OCI-LY7 (cell line): ENCODE measurements at regions of chr13 and their contacts with region 1.

Region 1: GRCh38 chr13:30617315-30618185 is at the start of gene USPL1:
- DNase-seq: peak; percentile 99
- H3K4me3 ChIP-seq: peak within 1 kb of the TSS; percentile 73
- H3K27ac ChIP-seq: peak within 1 kb of the TSS; percentile 92
- H3K4me1 ChIP-seq: peaks cover 43% of the 10 kb centered on the region
- CTCF ChIP-seq: peak; percentile 29; the same call in 1 of the 2 replicates
- total RNA-seq, gene USPL1: 19.2 and 21.1 TPM in 2 replicates

Region 2: DNA sequence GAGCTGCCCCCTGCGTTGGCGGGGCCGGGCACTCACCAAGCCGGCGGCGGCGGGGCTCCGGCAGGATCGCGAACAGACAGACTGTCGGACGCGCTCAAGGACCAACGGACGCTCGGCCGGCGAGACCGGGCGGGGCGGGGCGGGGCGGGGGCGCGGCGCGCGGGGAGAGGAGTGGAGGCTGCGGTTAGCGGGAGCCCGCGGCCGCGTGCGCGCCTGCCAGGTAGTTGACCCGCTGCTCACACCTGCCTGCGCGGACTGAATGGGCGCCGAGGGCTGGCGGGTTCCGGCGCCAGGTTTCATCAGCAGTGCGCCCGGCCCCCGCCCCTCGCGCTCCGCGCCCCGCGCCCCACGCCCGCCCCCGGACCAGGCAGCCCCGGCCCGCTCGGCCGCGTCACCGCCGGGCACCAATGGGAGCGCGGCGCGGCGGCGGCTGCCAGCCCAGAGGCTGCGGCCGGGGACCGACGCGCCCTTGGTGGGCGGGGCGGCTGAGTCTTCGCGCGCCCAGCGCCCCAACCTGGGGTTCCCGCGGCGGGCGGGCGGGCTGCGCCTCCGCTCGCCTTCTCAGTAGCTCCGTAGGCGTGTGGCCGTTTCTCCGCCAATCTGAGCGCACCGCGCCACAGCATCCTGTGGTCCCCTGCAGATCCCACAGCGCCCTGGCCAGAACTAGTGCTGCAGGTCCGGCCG is 1022.0 kb before region 1 on chr13 and contains the start of gene SLC7A1:
- CTCF ChIA-PET with region 1: no interaction called
- POLR2A ChIA-PET with region 1: no interaction called
- intact Hi-C with region 1: loop called (anchors 10 kb)
- DNase-seq: peak; percentile 94
- H3K4me3 ChIP-seq: peak within 1 kb of the TSS; percentile 99
- H3K27ac ChIP-seq: peak within 1 kb of the TSS; percentile 77
- H3K4me1 ChIP-seq: peaks cover 37% of the 10 kb centered on the region
- CTCF ChIP-seq: no peak
- total RNA-seq, gene SLC7A1: 32.3 and 39.5 TPM in 2 replicates

Region 3: GRCh38 chr13:30142486-30143211 is 474.9 kb before region 1 on chr13:
- CTCF ChIA-PET with region 1: no interaction called
- POLR2A ChIA-PET with region 1: no interaction called
- intact Hi-C with region 1: no loop called
- DNase-seq: no peak
- H3K4me3 ChIP-seq: no peak overlapping the region
- H3K27ac ChIP-seq: no peak overlapping the region
- H3K4me1 ChIP-seq: peaks cover 5% of the 10 kb centered on the region
- CTCF ChIP-seq: no peak

Region 4: DNA sequence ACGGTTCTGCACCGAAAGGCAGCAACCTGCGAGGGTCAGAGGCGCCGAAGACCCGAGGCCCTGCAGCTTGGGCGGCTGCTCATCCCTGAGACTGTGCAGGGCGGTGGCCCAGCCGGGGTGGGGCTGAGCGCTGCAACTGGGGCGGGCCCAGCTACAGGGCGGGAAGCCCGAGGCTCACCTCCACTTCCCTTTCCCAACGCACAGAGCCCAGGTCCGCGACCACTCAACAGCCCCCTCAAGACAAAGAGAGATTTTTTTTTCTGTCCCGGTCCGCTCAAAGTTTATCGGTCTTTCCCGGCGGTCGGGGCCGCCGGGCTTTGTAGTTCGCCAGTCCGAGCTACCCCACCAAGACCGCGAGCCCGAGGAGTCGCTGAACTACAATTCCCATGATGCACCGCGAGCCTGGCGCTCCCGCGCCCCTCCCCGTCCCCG is 310.8 kb before region 1 on chr13:
- CTCF ChIA-PET with region 1: no interaction called
- POLR2A ChIA-PET with region 1: interaction called, 3 read pairs
- intact Hi-C with region 1: loop called (anchors 2 kb)
- DNase-seq: peak; percentile 98
- H3K4me3 ChIP-seq: peak overlapping the region; percentile 82
- H3K27ac ChIP-seq: peak overlapping the region; percentile 70
- H3K4me1 ChIP-seq: peaks cover 72% of the 10 kb centered on the region
- CTCF ChIP-seq: no peak

Region 5: DNA sequence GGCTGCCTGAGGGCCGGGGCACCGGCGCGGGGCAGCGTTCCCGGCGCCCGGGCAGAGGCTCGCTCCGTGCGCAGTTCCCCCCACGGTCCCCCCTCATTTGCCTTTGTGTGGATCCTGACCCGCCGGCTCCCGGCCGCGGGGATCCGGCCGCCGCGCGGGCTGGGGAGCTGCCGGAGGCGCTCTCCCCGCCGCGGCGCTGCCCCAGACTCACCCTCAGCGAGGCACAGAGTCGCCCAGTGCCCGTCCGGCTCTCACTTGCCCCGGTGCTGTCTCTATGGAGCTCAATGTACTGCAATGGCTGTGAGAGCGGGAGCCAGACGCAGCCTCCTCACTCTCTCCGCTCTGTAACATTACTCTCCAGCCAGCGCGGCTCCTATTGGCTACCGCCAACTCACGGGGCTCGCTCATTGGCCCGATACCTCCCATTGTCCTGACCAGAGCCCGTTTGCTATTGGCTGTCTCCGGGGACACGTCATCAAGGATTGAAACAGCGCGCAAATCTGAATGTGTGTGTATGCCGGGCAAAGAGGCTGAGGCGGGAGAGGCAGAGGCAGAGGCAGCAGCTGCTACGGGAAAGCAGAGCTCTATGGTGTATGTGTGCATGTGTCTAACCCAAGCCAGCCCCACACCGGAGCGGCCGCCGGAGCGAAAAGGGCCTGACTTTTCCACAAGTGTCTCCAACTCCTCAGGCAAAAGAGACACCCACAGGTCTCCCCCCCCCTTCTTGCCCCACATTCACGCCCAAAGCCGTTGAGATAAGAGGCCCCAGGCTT is 151.8 kb before region 1 on chr13 and contains the start of gene HMGB1:
- CTCF ChIA-PET with region 1: no interaction called
- POLR2A ChIA-PET with region 1: interaction called, 4 read pairs
- intact Hi-C with region 1: loop called (anchors 1 kb)
- DNase-seq: peak; percentile 100
- H3K4me3 ChIP-seq: peak within 1 kb of the TSS; percentile 99
- H3K27ac ChIP-seq: peak within 1 kb of the TSS; percentile 93
- H3K4me1 ChIP-seq: peaks cover 44% of the 10 kb centered on the region
- CTCF ChIP-seq: no peak
- total RNA-seq, gene HMGB1: 1,288 and 1,675 TPM in 2 replicates

Region 6: DNA sequence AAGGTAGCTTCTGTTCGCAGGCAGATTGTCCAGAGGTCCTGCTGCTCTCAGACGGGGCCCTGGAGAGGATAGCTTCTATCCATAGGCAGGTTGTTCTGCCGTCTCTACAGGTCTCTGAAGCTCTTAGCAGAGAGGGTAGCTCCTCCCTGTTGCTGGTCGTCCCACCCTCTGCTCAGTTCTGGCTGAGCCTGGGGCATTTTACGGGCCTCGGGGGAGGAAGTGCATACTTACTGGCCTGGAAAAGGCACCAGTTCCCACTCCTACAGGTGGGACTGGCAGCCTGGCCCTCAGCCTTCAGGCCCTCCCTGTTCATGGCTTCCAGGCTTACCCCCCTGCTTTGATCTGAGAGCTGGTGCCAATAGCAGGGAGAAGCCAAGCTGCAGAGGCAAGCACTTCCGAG is 42.4 kb after region 1 on chr13:
- CTCF ChIA-PET with region 1: no interaction called
- POLR2A ChIA-PET with region 1: interaction called, 6 read pairs
- intact Hi-C with region 1: loop called (anchors 5 kb)
- DNase-seq: peak; percentile 23
- H3K4me3 ChIP-seq: no peak overlapping the region
- H3K27ac ChIP-seq: no peak overlapping the region
- H3K4me1 ChIP-seq: peaks cover 51% of the 10 kb centered on the region
- CTCF ChIP-seq: no peak

Region 7: DNA sequence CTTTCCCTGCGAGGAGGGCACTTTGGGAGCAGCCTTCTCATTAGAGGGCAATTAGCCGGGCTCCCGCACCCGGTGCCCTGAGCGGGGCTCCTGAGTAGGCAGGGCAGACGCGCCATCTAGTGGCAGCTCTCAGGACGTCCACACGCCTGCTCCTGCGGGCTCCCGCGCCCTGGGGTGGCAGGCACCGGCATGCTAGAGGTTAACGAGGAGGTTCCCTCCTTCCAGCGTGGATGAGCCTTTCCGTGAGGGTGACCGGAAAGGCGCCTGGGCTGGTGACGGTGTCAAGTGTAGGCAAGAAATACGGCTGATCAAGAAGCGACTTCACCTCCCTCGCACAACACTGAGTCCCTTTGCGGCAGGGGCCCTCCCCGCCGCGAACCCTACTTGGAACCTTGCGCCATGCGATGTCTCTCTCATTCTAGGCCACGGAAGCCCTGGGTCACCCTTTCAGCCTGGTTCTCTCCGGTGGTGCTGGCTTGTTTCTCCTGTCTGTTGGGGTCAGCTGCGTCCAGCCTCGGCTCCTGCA is 185.5 kb after region 1 on chr13:
- CTCF ChIA-PET with region 1: interaction called, 3 read pairs
- POLR2A ChIA-PET with region 1: no interaction called
- intact Hi-C with region 1: loop called (anchors 5 kb)
- DNase-seq: peak; percentile 82
- H3K4me3 ChIP-seq: no peak overlapping the region
- H3K27ac ChIP-seq: no peak overlapping the region
- H3K4me1 ChIP-seq: no peaks in the 10 kb centered on the region
- CTCF ChIP-seq: peak; percentile 94